Heart right ventricle (tissue), 16 donors: ENCODE measurements at regions of chr11 and their contacts with region 1.

Region 1: DNA sequence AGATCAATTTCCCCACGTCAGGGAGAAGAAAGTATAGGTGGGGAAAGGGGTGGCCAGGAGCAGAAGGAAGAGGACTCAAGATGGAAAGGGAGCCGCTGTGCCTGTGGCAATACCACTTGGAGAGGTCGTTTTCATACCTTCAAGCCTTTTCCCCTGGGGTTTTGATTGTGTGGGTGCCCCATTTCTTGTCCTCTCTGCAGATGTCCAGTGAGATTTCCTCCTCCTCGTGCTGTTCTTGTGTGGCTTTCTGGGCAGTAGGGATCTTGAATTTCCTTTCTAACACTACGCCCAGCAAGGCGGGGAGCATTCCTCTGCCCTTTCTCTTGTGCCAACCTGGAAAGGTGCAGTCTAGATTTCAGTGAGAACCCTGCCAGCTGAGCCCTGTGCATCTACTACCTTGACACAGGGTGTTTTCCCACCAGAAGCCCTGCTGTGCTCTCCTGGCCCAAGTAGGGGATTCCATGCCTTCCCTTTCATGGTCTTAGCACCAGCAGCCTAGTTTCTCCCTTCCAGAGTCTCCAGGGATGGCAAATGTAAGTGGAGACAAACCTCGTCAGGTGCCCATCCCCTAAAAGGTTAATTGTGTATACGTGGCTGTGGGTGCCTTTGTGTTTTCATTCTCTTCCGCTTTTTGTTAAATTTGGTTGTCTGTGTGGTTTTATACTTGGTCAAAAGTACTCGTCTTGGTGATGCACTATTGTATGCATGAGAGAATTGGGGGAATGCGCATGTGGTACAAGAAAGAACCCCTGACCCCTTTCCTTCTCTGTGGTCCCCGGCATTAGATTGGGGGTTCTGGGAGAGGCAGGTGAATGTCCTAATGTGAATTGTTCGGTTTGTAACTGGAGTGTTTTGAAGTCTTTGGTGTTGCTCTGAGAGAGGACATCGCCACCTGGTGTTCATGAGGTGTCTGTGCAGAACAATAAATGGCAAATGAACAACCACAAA is 71.4 kb upstream of the MPEG1 start:
- DNase-seq: peak in 1 of 2 donors; percentile 23
- ATAC-seq: peak in 7 of 8 donors; percentile 46 to 75 (median 69)
- H3K4me3 ChIP-seq: peak overlapping the region in 1 of 10 donors; percentile 17
- H3K27ac ChIP-seq: no peak overlapping the region
- H3K4me1 ChIP-seq: peaks cover 0 to 9% (median 0%) of the 10 kb centered on the region in 9 donors
- H3K27me3 ChIP-seq: peaks cover 0 to 12% (median 0%) of the 10 kb centered on the region in 7 donors
- CTCF ChIP-seq: peak; percentile 59 to 87 (median 83)

Region 2: DNA sequence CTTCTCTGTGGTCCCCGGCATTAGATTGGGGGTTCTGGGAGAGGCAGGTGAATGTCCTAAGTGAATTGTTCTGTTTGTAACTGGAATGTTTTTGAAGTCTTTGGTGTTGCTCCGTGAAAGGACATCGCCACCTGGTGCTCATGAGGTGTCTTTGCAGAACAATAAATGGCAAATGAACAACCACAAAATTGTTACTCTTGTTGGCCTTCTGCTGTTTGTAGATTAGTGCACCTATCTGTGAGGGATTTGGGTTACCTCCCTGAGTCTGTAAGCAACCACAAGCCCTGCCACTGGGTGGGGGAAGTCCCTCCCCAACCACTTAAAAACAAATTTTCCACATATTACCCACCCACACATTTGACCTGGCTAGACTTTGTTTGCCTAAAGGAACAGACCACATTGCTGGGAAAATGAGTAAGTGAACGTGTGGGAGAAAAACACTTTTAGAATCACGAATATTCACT is 76.1 kb before region 1 on chr11:
- intact Hi-C with region 1: loop called in 6 of 10 experiments (anchors 2 to 10 kb)
- DNase-seq: peak in 1 of 2 donors; percentile 37
- ATAC-seq: peak in 6 of 8 donors; percentile 32 to 58 (median 50)
- H3K4me3 ChIP-seq: peak overlapping the region in 5 of 10 donors; percentile 22 to 58 (median 37)
- H3K27ac ChIP-seq: peak overlapping the region in 5 of 10 donors; percentile 16 to 69 (median 53)
- H3K4me1 ChIP-seq: peaks cover 0 to 32% (median 9%) of the 10 kb centered on the region in 9 donors
- H3K27me3 ChIP-seq: peaks cover 0 to 3% (median 0%) of the 10 kb centered on the region in 7 donors
- CTCF ChIP-seq: peak; percentile 53 to 83 (median 76)

Region 3: DNA sequence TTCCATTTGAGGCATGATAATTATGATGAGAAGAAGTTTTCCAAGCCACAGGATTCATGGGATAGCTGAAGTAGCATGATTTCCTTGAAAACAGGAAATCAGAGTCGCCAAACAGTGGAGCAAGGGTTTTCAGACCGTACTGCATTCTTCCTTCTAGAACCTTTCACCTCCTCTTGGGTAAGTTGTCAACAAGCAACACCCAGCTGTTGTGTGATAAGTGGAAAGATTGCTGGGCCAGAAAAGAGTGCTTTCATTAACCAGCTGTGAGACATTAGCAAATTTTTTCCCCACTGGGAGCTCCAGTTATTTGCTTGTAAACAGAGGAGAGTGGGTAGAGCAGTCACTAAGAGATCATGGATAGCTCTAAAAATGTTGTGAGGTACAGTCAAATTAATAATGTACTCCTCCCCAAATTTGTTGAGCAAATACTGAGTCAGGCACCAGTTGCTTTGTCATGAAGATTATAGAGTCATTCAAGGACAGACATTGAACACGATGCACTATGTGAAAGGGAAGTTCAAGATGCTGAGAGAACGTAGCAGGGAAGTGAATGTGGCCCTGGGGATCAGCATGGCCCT is 59.7 kb before region 1 on chr11:
- intact Hi-C with region 1: loop called in 1 of 10 experiments (anchors 5 kb)
- DNase-seq: peak in 1 of 2 donors; percentile 39
- ATAC-seq: peak; percentile 57 to 86 (median 74)
- H3K4me3 ChIP-seq: no peak overlapping the region
- H3K27ac ChIP-seq: peak overlapping the region in 9 of 10 donors; percentile 13 to 85 (median 61)
- H3K4me1 ChIP-seq: peaks cover 0 to 63% (median 22%) of the 10 kb centered on the region in 9 donors
- H3K27me3 ChIP-seq: no peaks in the 10 kb centered on the region
- CTCF ChIP-seq: no peak